ENCODE measurements at regions of chr9 and their contacts with region 1.

Region 1: GRCh38 chr9:38008168-38009034 is 60.6 kb downstream of the SHB start:
- DNase-seq: peak; percentile 86 to 95 (median 90)
- H3K4me3 ChIP-seq: no peak overlapping the region
- H3K4me3 Mint-ChIP-seq: peak overlapping the region; percentile 26 to 60
- H3K27ac ChIP-seq: peak overlapping the region; percentile 67 to 78
- H3K27ac Mint-ChIP-seq: peak overlapping the region; percentile 89 to 95 (median 93)
- H3K4me1 ChIP-seq: peaks cover 18 to 29% of the 10 kb centered on the region in 2 donors
- H3K4me1 Mint-ChIP-seq: peaks cover 36% of the 10 kb centered on the region
- H3K27me3 ChIP-seq: no peaks in the 10 kb centered on the region
- H3K27me3 Mint-ChIP-seq: peaks cover 0 to 6% (median 3%) of the 10 kb centered on the region in 3 donors
- CTCF ChIP-seq: no peak

Region 2: GRCh38 chr9:37936965-37937364 is 71.4 kb before region 1 on chr9:
- intact Hi-C with region 1: no loop called
- DNase-seq: no peak
- H3K4me3 ChIP-seq: no peak overlapping the region
- H3K4me3 Mint-ChIP-seq: no peak overlapping the region
- H3K27ac ChIP-seq: no peak overlapping the region
- H3K27ac Mint-ChIP-seq: no peak overlapping the region
- H3K4me1 ChIP-seq: no peaks in the 10 kb centered on the region
- H3K4me1 Mint-ChIP-seq: peaks cover 3% of the 10 kb centered on the region
- H3K27me3 ChIP-seq: no peaks in the 10 kb centered on the region
- H3K27me3 Mint-ChIP-seq: peaks cover 0 to 3% (median 2%) of the 10 kb centered on the region in 3 donors
- CTCF ChIP-seq: no peak

Region 3: DNA sequence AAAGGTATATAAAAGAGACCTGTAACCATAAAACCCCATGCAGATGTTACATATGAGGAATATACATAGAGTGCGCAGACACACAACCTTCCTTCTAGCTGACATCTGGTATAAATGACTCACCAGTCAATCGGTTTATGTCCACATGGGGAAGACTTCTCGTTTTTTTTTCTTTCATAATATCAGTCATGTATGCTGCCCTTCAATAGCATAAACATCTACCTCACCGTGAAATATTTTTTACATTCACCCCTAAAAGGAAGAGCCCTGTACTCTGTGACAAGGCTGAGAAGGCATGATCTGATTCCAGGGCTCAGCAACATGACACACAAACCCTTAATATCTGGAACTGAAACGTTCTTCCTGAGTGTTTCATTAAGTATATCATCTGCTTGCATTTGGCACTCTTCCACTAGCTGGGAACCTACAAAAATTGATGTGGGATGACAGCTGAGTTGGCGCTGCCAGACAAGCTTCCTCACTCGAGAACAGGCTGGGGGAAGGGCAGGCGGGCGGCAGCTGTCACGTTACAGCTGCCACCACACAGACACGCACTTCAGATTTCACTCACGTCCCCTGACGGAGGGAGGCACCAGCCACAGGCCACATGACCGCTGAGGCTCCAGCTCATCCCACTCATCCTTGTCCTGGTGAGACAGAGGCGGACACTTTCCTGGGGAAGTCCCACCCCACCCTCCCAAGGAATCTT is 13.6 kb before region 1 on chr9:
- intact Hi-C with region 1: loop called in 1 of 2 experiments (anchors 2 kb)
- DNase-seq: peak; percentile 95 to 98 (median 95)
- H3K4me3 ChIP-seq: peak overlapping the region in 1 of 3 experiments; percentile 41
- H3K4me3 Mint-ChIP-seq: peak overlapping the region; percentile 67 to 83
- H3K27ac ChIP-seq: peak overlapping the region; percentile 85 to 97
- H3K27ac Mint-ChIP-seq: peak overlapping the region; percentile 97 to 99 (median 99)
- H3K4me1 ChIP-seq: peaks cover 74% of the 10 kb centered on the region in 2 donors
- H3K4me1 Mint-ChIP-seq: peaks cover 81% of the 10 kb centered on the region
- H3K27me3 ChIP-seq: no peaks in the 10 kb centered on the region
- H3K27me3 Mint-ChIP-seq: peaks cover 0 to 3% (median 0%) of the 10 kb centered on the region in 3 donors
- CTCF ChIP-seq: no peak

Region 4: DNA sequence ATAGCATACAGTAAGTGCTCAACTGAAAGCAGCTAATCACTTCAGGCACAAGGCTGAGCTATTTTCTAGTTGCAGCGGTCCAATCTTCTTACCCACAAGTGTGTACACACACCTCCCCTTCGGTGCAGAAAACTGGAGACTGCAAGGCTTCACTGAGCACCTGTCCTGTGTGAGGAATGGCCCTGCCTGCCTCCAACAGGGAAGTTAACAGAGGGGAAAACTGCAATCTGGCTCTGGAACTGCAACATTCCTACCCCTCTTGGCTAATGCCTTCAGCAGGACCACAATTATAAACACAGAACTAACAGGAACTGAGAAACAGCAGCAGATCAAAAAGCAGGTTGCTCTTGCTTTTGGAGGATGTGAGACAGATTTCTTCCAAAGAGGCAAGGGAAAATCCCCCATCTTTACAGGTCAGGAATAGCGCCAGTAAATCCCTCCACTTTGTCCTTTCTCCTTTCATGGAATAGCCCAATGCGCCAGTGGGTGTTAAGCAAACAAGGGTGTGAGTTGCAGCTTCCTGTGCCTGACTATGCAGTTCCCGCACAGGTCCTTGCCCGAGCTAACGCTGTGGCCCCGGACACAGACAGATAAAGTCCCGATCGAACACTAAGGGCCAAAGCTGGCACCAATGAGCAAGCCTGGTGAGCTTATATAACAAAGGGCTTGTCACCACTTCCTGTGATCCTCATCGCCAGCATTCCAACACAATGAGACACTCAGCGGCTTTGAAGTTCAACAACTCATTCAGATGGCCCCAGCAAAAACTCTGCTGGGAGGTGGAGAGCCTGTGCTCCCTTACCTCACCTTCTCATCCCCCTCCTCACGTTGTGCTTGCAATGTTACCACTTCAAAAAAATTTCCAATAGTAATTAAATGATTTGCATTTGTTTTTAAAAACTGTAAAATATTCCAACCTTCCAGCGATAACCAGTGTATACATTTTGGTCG is 39.2 kb after region 1 on chr9:
- intact Hi-C with region 1: loop called in 1 of 2 experiments (anchors 5 kb)
- DNase-seq: peak in 2 of 3 donors; percentile 47 to 66
- H3K4me3 ChIP-seq: peak overlapping the region in 1 of 3 experiments; percentile 53
- H3K4me3 Mint-ChIP-seq: peak overlapping the region; percentile 50 to 87
- H3K27ac ChIP-seq: peak overlapping the region in 1 of 2 donors; percentile 50
- H3K27ac Mint-ChIP-seq: peak overlapping the region; percentile 15 to 86 (median 48)
- H3K4me1 ChIP-seq: peaks cover 28 to 31% of the 10 kb centered on the region in 2 donors
- H3K4me1 Mint-ChIP-seq: peaks cover 37% of the 10 kb centered on the region
- H3K27me3 ChIP-seq: no peaks in the 10 kb centered on the region
- H3K27me3 Mint-ChIP-seq: peaks cover 0 to 10% (median 2%) of the 10 kb centered on the region in 3 donors
- CTCF ChIP-seq: no peak